ENCODE measurements at regions of chr5 and their contacts with region 1.

Region 1: DNA sequence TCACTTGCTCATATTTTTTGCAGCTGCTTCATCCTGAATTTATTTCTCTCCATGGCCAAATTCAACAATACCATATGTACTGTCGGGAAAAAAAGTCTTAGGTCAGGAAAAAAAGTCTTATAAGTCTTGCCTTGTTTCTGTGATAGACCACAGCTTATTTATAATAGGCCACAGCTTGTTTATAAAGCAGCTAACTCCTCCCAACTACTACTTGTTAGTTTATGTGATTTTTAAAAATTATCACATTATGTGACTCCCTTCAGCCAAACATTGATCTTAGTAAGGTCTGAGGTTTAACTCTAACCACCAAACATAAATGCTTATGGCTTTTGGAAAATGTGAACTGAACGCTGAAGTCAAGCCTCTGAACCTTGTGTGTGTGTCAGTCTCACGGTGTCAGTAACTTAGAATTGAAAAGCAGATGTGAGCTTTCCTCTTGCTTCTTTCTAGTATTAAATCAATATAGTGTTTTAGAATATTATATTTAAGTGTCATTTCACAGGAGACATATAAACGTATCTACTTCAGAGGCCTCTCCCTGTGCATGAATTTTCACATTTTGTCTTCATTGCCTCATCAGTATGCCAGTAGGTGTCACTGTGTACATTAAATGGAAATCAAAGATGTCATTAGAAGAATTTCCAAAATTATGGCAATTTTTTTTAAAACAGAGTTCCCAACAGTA is 51.3 kb downstream of the SNX24 start:
- DNase-seq: no peak
- H3K4me3 ChIP-seq: no peak overlapping the region
- H3K27ac ChIP-seq: no peak overlapping the region
- H3K4me1 ChIP-seq: no peaks in the 10 kb centered on the region
- H3K27me3 ChIP-seq: no peaks in the 10 kb centered on the region
- CTCF ChIP-seq: peak; percentile 60

Region 2: DNA sequence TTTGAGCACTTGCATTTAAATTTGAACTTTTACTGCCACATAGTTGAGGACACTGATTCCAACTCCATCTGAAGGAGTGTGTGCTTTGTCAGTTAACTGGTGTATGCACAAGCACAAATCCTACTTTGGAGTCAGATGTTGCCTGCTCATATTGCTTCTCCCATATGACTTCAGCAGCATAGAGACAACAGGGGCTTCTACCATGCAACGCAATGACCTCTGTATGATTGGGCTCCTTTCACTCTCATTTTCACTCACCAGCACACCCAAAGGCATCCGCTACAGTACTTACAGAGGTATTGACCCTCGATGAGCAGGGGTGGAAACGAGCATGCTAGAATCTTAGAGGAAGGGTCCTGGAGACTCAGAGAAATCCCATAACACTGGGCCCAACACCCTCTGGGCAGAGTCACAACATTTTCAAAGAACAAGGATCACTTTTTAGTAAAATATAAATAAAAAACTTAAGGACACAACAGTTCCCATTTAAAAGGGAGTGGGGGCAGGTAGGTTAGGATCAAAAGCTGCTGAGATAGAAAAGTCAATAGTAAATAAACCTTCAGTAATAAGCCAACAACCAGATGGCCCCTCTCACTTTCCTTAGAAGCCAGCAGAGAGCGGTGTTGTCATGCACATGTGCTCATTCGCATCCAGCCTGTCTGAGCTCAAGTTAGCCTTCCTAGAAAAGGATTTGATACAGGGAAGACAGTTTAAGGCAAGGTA is 380.9 kb before region 1 on chr5:
- CTCF ChIA-PET with region 1: no interaction called
- POLR2A ChIA-PET with region 1: no interaction called
- intact Hi-C with region 1: loop called (anchors 5 kb)
- DNase-seq: peak; percentile 32 to 59
- H3K4me3 ChIP-seq: no peak overlapping the region
- H3K27ac ChIP-seq: no peak overlapping the region
- H3K4me1 ChIP-seq: no peaks in the 10 kb centered on the region
- H3K27me3 ChIP-seq: no peaks in the 10 kb centered on the region
- CTCF ChIP-seq: peak; percentile 77

Region 3: GRCh38 chr5:122541388-122541787 is 355.4 kb before region 1 on chr5:
- CTCF ChIA-PET with region 1: no interaction called
- POLR2A ChIA-PET with region 1: no interaction called
- intact Hi-C with region 1: no loop called
- DNase-seq: no peak
- H3K4me3 ChIP-seq: no peak overlapping the region
- H3K27ac ChIP-seq: no peak overlapping the region
- H3K4me1 ChIP-seq: no peaks in the 10 kb centered on the region
- H3K27me3 ChIP-seq: no peaks in the 10 kb centered on the region
- CTCF ChIP-seq: no peak

Region 4: DNA sequence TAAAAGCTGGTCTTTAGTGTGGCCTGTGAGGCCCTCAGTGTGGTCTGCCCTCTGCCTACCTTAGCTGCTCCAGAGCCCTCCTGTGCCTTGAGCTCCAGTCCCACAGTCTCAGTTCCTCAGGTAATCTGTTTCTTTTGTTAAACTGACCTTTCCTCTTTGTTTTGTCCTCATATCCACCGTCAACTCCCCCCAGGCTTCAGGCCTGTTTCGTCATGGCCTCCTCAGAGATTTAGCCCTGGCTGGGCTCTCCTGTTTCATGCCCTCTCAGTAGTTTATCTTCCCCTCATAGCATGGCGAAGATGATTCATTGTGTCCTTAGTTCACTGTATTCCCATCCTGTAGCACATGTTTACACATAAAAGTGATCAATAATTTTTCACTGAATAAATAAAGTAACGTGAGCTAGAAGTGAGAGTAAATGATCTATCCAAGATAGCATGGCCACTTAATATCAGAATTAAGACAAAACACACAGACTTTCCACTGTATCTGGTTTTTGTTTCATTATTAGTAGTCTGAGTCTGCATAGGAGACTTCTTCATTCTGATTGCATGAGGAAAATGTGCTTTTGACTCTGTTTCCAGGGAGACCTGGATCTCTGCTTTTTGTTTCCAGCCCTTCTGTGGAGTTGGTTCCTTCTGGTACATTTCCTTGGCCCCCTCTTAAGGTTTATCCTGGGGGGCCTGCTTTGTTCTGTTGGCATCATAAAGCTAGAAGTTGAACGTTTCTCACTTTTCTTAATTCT is 19.1 kb after region 1 on chr5:
- CTCF ChIA-PET with region 1: no interaction called
- POLR2A ChIA-PET with region 1: no interaction called
- intact Hi-C with region 1: no loop called
- DNase-seq: no peak
- H3K4me3 ChIP-seq: no peak overlapping the region
- H3K27ac ChIP-seq: no peak overlapping the region
- H3K4me1 ChIP-seq: no peaks in the 10 kb centered on the region
- H3K27me3 ChIP-seq: no peaks in the 10 kb centered on the region
- CTCF ChIP-seq: no peak

Region 5: DNA sequence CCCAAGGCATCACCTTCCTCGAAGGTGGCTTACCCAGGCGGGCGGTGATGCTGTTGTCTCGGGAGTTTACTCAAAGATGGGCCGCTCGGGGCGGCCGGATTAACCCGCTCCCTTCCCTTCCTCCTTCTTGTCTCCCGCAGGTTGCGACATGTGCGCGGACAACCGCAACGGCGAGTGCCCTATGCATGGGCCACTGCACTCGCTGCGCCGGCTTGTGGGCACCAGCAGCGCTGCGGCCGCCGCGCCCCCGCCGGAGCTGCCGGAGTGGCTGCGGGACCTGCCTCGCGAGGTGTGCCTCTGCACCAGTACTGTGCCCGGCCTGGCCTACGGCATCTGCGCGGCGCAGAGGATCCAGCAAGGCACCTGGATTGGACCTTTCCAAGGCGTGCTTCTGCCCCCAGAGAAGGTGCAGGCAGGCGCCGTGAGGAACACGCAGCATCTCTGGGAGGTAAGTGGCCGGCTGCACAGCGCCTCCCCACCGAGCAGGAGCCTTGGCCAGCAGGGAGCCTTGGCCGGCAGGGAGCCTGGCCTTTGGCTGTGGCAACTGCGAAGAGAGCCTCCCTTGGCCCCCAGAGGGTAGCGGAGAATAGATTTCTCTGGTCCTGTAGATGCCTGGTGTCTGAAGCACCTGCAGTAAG is 202.9 kb after region 1 on chr5:
- CTCF ChIA-PET with region 1: no interaction called
- POLR2A ChIA-PET with region 1: no interaction called
- intact Hi-C with region 1: no loop called
- DNase-seq: no peak
- H3K4me3 ChIP-seq: no peak overlapping the region
- H3K27ac ChIP-seq: no peak overlapping the region
- H3K4me1 ChIP-seq: no peaks in the 10 kb centered on the region
- H3K27me3 ChIP-seq: no peaks in the 10 kb centered on the region
- CTCF ChIP-seq: no peak

Measured in PC-9 (cell line).